ENCODE measurements at regions of chr15 and their contacts with region 1.

Region 1: GRCh38 chr15:66497502-66498455 is at the start of gene SNAPC5:
- DNase-seq: peak; percentile 93
- total RNA-seq, gene SNAPC5: 60.5 and 60.7 TPM in 2 replicates

Region 2: GRCh38 chr15:66323312-66323928 is 174.4 kb before region 1 on chr15:
- in situ Hi-C with region 1: loop called (anchors 25 kb)
- DNase-seq: no peak

Region 3: DNA sequence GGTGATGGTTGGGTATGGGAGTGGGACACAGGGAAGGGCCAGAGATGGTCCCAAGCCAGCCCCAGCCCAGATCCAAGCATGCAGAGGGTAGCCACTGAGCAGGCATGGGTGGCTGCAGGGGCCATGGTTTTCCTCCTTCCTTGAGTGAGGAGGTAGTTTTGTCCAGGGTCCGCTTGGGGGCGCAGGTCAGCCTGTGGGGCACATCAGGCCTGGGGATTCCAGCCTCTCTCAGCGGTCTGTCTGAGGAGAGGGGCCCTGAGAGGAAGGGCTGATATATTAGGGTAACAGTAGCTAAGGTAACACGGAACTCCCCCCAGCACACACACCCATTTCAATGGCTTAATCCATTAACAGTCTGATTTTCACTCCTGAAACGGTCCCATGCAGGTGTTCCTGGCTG is 90.8 kb after region 1 on chr15:
- in situ Hi-C with region 1: no loop called
- DNase-seq: peak; percentile 64